ENCODE measurements at regions of chr6 and their contacts with region 1.

Region 1: GRCh38 chr6:89834884-89835792 is 5.5 kb downstream of the CASP8AP2 start:
- DNase-seq: peak; percentile 22
- H3K4me3 Mint-ChIP-seq: peak overlapping the region; percentile 15
- H3K27ac Mint-ChIP-seq: peak overlapping the region; percentile 94
- H3K4me1 Mint-ChIP-seq: peaks cover 53% of the 10 kb centered on the region
- H3K27me3 Mint-ChIP-seq: no peaks in the 10 kb centered on the region

Region 2: GRCh38 chr6:89859744-89860143 is 24.6 kb after region 1 on chr6:
- intact Hi-C with region 1: loop called (anchors 1 kb)
- DNase-seq: peak; percentile 1
- H3K4me3 Mint-ChIP-seq: no peak overlapping the region
- H3K27ac Mint-ChIP-seq: peak overlapping the region; percentile 86
- H3K4me1 Mint-ChIP-seq: peaks cover 31% of the 10 kb centered on the region
- H3K27me3 Mint-ChIP-seq: no peaks in the 10 kb centered on the region

Region 3: DNA sequence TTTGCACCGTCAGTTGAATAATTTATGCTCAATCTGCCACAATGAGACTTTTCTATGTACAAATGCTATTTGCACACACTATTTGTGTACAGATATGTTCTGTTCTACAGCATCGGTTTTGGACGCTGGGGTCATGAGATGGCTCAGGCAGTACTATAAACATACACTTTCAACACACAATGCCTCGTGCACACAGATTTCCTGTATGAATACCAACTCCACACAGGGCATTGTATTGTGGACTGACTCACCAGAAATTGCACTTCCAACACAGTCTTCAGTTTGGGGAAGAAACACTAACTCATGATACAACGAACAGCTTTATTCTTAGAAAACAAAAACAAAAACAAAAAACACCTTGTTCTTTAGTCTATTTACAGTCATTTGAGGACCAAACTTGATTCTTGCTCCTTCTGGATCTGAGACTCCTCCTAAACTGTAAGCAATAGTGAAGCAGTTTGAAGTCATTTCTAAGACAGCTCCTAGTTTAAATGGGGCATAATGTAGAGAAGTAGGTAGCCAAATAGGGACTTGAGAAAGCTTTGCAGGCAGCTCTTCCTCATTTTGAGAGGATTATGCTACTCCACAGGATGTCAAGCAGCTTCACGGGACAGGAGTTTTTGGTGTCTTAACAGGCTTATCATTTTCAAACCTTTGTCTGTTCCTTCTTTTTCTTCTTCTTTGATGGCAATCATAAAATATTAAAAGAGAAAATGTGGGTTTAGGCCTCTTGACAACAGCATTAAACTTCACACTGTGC is 92.8 kb after region 1 on chr6:
- intact Hi-C with region 1: loop called (anchors 5 kb)
- DNase-seq: no peak
- H3K4me3 Mint-ChIP-seq: no peak overlapping the region
- H3K27ac Mint-ChIP-seq: peak overlapping the region; percentile 82
- H3K4me1 Mint-ChIP-seq: peaks cover 45% of the 10 kb centered on the region
- H3K27me3 Mint-ChIP-seq: no peaks in the 10 kb centered on the region